CD8-positive, alpha-beta memory T cell (primary cell): ENCODE measurements at regions of chr17 and their contacts with region 1.

Region 1: GRCh38 chr17:28710861-28711722 is 596 bp downstream of the PROCA1 start:
- DNase-seq: peak; percentile 84 to 91 (median 85)
- H3K4me3 ChIP-seq: peak overlapping the region; percentile 82
- H3K4me3 Mint-ChIP-seq: peak overlapping the region; percentile 86 to 97 (median 91)
- H3K27ac ChIP-seq: peak overlapping the region; percentile 83
- H3K27ac Mint-ChIP-seq: peak overlapping the region; percentile 41 to 97 (median 92)
- H3K4me1 ChIP-seq: peaks cover 17% of the 10 kb centered on the region
- H3K4me1 Mint-ChIP-seq: peaks cover 16 to 24% (median 20%) of the 10 kb centered on the region in 3 donors
- H3K27me3 ChIP-seq: peaks cover under 1% of the 10 kb centered on the region
- H3K27me3 Mint-ChIP-seq: peaks cover 14 to 17% of the 10 kb centered on the region in 2 donors

Region 2: DNA sequence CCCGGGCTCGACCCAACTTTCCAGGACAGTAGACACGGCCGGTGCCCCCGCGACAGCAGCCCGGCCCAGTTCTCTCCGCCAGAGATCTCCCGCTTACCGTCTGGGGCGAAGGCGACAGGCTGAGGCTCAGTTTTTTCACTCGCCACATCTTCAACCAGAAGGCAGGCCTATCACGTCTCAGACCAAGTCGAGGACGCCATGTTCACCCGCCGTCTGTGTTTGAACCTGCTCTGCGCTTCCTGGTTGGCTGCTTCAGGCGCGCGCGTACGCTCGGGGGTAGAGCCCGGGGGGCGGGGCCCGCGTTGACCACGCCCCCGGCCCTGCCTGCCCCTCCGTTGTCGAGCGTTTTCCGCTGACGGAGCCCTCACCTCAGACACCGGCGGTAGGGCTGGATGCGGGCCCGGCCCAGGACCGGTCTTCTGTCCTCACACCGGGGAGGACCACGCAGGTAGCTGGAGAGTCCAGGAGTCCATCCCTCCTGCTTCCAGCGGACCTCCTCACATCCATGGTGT is 112.2 kb before region 1 on chr17 and contains the start of gene SPAG5:
- CTCF ChIA-PET with region 1: no interaction called
- POLR2A ChIA-PET with region 1: no interaction called
- DNase-seq: peak; percentile 92 to 96 (median 95)
- H3K4me3 ChIP-seq: peak within 1 kb of the TSS; percentile 86
- H3K4me3 Mint-ChIP-seq: peak within 1 kb of the TSS; percentile 89 to 99 (median 93)
- H3K27ac ChIP-seq: peak within 1 kb of the TSS; percentile 99
- H3K27ac Mint-ChIP-seq: peak within 1 kb of the TSS; percentile 95 to 100 (median 99)
- H3K4me1 ChIP-seq: peaks cover 5% of the 10 kb centered on the region
- H3K4me1 Mint-ChIP-seq: peaks cover 19 to 25% (median 24%) of the 10 kb centered on the region in 3 donors
- H3K27me3 ChIP-seq: no peaks in the 10 kb centered on the region
- H3K27me3 Mint-ChIP-seq: no peaks in the 10 kb centered on the region
- total RNA-seq, gene SPAG5: 77.8 to 79.7 TPM

Region 3: GRCh38 chr17:28661635-28662537 is 49.2 kb before region 1 on chr17 and contains the starts of genes SDF2 and SUPT6H:
- CTCF ChIA-PET with region 1: interaction called, 4 read pairs
- POLR2A ChIA-PET with region 1: interaction called, 11 read pairs
- DNase-seq: peak; percentile 90 to 97 (median 94)
- H3K4me3 ChIP-seq: peak within 1 kb of the TSS; percentile 97
- H3K4me3 Mint-ChIP-seq: peak within 1 kb of the TSS; percentile 99 to 100 (median 100)
- H3K27ac ChIP-seq: peak within 1 kb of the TSS; percentile 98
- H3K27ac Mint-ChIP-seq: peak within 1 kb of the TSS; percentile 99 to 100 (median 100)
- H3K4me1 ChIP-seq: peaks cover 49% of the 10 kb centered on the region
- H3K4me1 Mint-ChIP-seq: peaks cover 50 to 70% (median 62%) of the 10 kb centered on the region in 3 donors
- H3K27me3 ChIP-seq: no peaks in the 10 kb centered on the region
- H3K27me3 Mint-ChIP-seq: no peaks in the 10 kb centered on the region
- total RNA-seq, gene SDF2: 51.4 to 55.1 TPM
- total RNA-seq, gene SUPT6H: 80.0 to 88.4 TPM

Region 4: GRCh38 chr17:28675980-28676379 is 35.1 kb before region 1 on chr17:
- CTCF ChIA-PET with region 1: no interaction called
- POLR2A ChIA-PET with region 1: no interaction called
- DNase-seq: no peak
- H3K4me3 ChIP-seq: no peak overlapping the region
- H3K4me3 Mint-ChIP-seq: no peak overlapping the region
- H3K27ac ChIP-seq: no peak overlapping the region
- H3K27ac Mint-ChIP-seq: peak overlapping the region in 1 of 8 donors; percentile 27
- H3K4me1 ChIP-seq: no peaks in the 10 kb centered on the region
- H3K4me1 Mint-ChIP-seq: peaks cover 0 to 4% (median 0%) of the 10 kb centered on the region in 3 donors
- H3K27me3 ChIP-seq: no peaks in the 10 kb centered on the region
- H3K27me3 Mint-ChIP-seq: no peaks in the 10 kb centered on the region